Activated CD4-positive, alpha-beta T cell treated with anti-CD3 and anti-CD28 coated beads, Interleukin-2, amount 10 ng/mL, durations not matched to agents 24 days and 14 days (primary cell): ENCODE measurements at regions of chr17 and their contacts with region 1.

Region 1: GRCh38 chr17:80147035-80147836 is at the start of gene EIF4A3:
- DNase-seq: peak; percentile 99
- H3K4me3 Mint-ChIP-seq: peak within 1 kb of the TSS; percentile 88
- H3K27ac Mint-ChIP-seq: peak within 1 kb of the TSS; percentile 97
- H3K4me1 Mint-ChIP-seq: peaks cover 37% of the 10 kb centered on the region
- H3K27me3 Mint-ChIP-seq: no peaks in the 10 kb centered on the region
- total RNA-seq, gene EIF4A3: 190 and 192 TPM in 2 replicates

Region 2: GRCh38 chr17:80101011-80101945 is 46.0 kb before region 1 on chr17 and contains the start of gene GAA:
- intact Hi-C with region 1: loop called (anchors 1 kb)
- DNase-seq: peak; percentile 97
- H3K4me3 Mint-ChIP-seq: peak within 1 kb of the TSS; percentile 95
- H3K27ac Mint-ChIP-seq: peak within 1 kb of the TSS; percentile 87
- H3K4me1 Mint-ChIP-seq: peaks cover 24% of the 10 kb centered on the region
- H3K27me3 Mint-ChIP-seq: peaks cover 8% of the 10 kb centered on the region
- total RNA-seq, gene GAA: 17.9 and 20.7 TPM in 2 replicates

Region 3: GRCh38 chr17:80219013-80219762 is 72.0 kb after region 1 on chr17:
- intact Hi-C with region 1: loop called (anchors 2 kb)
- DNase-seq: peak; percentile 94
- H3K4me3 Mint-ChIP-seq: peak overlapping the region; percentile 93
- H3K27ac Mint-ChIP-seq: peak overlapping the region; percentile 91
- H3K4me1 Mint-ChIP-seq: peaks cover 11% of the 10 kb centered on the region
- H3K27me3 Mint-ChIP-seq: peaks cover 2% of the 10 kb centered on the region

Region 4: GRCh38 chr17:80263253-80264204 is 116.3 kb after region 1 on chr17:
- intact Hi-C with region 1: loop called (anchors 1 kb)
- DNase-seq: peak; percentile 97
- H3K4me3 Mint-ChIP-seq: peak overlapping the region; percentile 99
- H3K27ac Mint-ChIP-seq: peak overlapping the region; percentile 97
- H3K4me1 Mint-ChIP-seq: peaks cover 45% of the 10 kb centered on the region
- H3K27me3 Mint-ChIP-seq: no peaks in the 10 kb centered on the region